H1 (cell line): ENCODE measurements at regions of chr2 and their contacts with region 1.

Region 1: GRCh38 chr2:119441376-119442225 is 9.9 kb downstream of the TMEM37 start:
- DNase-seq: no peak
- H3K4me3 ChIP-seq: no peak overlapping the region
- H3K27ac ChIP-seq: no peak overlapping the region
- H3K4me1 ChIP-seq: peaks cover 0 to 4% (median 2%) of the 10 kb centered on the region in 4 experiments; a peak in 2 of 7 replicates
- H3K27me3 ChIP-seq: no peaks in the 10 kb centered on the region
- CTCF ChIP-seq: no peak
- EP300 ChIP-seq: no peak
- POLR2A ChIP-seq: no peak
- RAD21 ChIP-seq: no peak

Region 2: GRCh38 chr2:119431155-119431975 is 10.2 kb before region 1 on chr2 and contains the start of gene TMEM37:
- CTCF ChIA-PET with region 1: interaction called, 4 read pairs
- POLR2A ChIA-PET with region 1: interaction called, 22 read pairs
- DNase-seq: peak; percentile 50 to 79
- H3K4me3 ChIP-seq: peak within 1 kb of the TSS; percentile 58 to 72 (median 68)
- H3K27ac ChIP-seq: peak within 1 kb of the TSS; percentile 65; the same call in 1 of the 2 replicates
- H3K4me1 ChIP-seq: peaks cover 0 to 28% (median 15%) of the 10 kb centered on the region in 4 experiments; a peak in 6 of 7 replicates
- H3K27me3 ChIP-seq: peaks cover 0 to 14% (median 6%) of the 10 kb centered on the region in 4 experiments; a peak in 6 of 7 replicates
- CTCF ChIP-seq: no peak
- EP300 ChIP-seq: no peak
- POLR2A ChIP-seq: peak in 1 of 2 experiments; percentile 26; a peak in 1 of 3 replicates
- RAD21 ChIP-seq: no peak; a peak in 1 of 4 replicates
- total RNA-seq, gene TMEM37: 9.9 and 11.0 TPM in 2 replicates

Region 3: DNA sequence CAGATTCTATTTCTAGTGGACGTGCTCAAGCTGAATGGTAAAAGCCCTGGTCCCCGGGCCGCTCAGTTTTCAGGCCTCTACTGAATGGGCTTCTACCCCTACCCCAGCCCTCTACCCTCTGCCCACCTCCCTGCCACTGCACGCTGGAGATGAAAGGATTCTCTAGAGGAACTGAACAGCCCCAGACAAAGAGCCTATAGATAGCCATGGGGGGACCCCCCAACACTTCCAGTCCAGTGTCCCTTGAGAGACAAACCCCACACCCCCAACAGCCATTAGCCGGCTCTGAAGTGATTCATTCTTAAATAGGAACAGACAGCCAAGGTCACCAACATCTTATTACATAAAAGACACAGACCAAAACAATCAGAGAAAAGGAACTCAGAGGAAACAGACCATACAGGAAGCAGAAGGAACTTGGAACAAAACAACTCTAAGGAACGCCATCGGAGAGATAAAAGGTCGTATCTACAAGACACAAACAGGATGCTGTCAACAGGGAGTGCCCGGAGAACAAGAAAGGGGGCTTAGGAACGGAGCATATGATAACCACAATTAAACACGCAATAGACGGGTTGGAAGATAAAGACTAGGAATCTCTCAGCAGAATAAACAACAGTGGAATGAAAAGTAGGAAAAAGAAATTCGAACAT is 13.6 kb after region 1 on chr2:
- CTCF ChIA-PET with region 1: interaction called, 13 read pairs
- POLR2A ChIA-PET with region 1: interaction called, 8 read pairs
- DNase-seq: no peak
- H3K4me3 ChIP-seq: no peak overlapping the region
- H3K27ac ChIP-seq: no peak overlapping the region
- H3K4me1 ChIP-seq: no peaks in the 10 kb centered on the region
- H3K27me3 ChIP-seq: 0 out of 7 replicates have a peak, but pooled peaks cover 0 to 2% (median 0%) of the 10 kb centered on the region in 4 experiments
- CTCF ChIP-seq: no peak
- EP300 ChIP-seq: no peak
- POLR2A ChIP-seq: no peak
- RAD21 ChIP-seq: no peak